Caco-2 (cell line): ENCODE measurements at regions of chr1 and their contacts with region 1.

Region 1: GRCh38 chr1:33007190-33008050 is 29.3 kb downstream of the AK2 start:
- DNase-seq: peak; percentile 53 to 62
- H3K4me3 ChIP-seq: no peak overlapping the region
- H3K4me3 Mint-ChIP-seq: peak overlapping the region; percentile 30
- H3K27ac Mint-ChIP-seq: peak overlapping the region; percentile 83
- H3K4me1 ChIP-seq: peaks cover 49% of the 10 kb centered on the region
- H3K4me1 Mint-ChIP-seq: peaks cover 37% of the 10 kb centered on the region
- H3K27me3 ChIP-seq: no peaks in the 10 kb centered on the region
- H3K27me3 Mint-ChIP-seq: no peaks in the 10 kb centered on the region
- CTCF ChIP-seq: peak in 1 of 2 experiments; percentile 26

Region 2: DNA sequence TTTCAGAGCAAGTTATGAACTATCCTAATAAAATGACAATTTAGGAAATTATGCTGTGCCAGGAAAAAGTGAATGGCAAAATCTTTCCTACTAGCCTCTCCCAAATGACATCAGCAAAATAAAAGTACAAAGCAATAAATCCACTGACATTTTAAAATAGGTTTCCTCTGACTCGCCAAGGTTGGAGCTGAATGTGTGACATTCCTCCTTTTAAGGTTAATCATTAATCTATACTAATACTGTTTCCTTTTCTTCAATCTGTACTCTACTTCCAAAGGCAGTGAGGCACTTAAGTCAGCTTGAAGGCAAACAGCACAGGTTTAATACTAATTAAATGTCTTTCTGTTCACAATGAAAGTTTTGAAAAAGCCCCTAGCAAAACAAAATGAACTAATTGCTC is 58.5 kb before region 1 on chr1:
- CTCF ChIA-PET with region 1: no interaction called
- POLR2A ChIA-PET with region 1: no interaction called
- intact Hi-C with region 1: loop called (anchors 5 kb)
- DNase-seq: peak in 1 of 2 experiments; percentile 13
- H3K4me3 ChIP-seq: no peak overlapping the region
- H3K4me3 Mint-ChIP-seq: peak overlapping the region; percentile 22
- H3K27ac Mint-ChIP-seq: no peak overlapping the region
- H3K4me1 ChIP-seq: peaks cover 36% of the 10 kb centered on the region
- H3K4me1 Mint-ChIP-seq: peaks cover 8% of the 10 kb centered on the region
- H3K27me3 ChIP-seq: no peaks in the 10 kb centered on the region
- H3K27me3 Mint-ChIP-seq: no peaks in the 10 kb centered on the region
- CTCF ChIP-seq: no peak

Region 3: DNA sequence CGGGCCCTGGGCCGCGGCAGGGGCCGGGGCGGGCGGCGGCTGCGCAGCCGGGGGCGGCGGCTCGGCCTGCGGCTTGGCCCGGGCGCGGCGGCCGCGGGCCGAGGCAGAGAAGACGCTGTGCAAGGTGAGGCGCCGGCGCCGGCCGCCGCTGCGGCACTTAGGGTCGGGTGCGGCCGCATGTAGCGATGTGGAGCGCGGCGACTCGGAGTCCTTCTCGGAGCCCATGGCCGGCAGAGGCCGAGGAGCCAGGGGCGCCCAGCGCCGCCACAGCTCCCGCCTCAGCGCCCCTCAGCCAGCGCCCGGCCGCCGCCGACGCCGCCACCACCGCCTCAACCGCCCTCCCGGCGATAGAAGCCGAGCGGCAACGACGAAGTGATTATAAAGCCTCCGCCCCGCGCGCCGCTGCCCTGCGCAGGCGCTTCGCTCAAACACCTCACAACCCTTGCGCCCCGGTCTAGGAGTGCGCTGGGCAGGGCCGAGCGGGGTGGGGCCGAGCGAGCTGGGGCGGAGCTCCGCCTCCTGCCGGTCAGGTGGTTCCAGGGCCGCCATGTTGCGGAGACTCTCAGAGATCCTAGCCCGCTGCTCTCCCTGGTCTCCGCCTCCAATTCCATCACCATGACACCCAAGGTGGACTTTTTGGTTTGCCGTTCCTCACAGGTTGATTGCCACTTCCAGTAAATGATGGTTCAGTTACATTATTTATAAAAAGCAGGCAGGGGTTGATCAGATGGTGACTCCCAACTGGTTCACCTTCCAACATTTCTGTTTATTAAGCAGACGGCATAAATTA is 42.8 kb before region 1 on chr1 and contains the start of gene RNF19B:
- CTCF ChIA-PET with region 1: no interaction called
- POLR2A ChIA-PET with region 1: no interaction called
- intact Hi-C with region 1: loop called (anchors 1 kb)
- DNase-seq: peak; percentile 93 to 94
- H3K4me3 ChIP-seq: peak within 1 kb of the TSS; percentile 74
- H3K4me3 Mint-ChIP-seq: peak within 1 kb of the TSS; percentile 81
- H3K27ac Mint-ChIP-seq: no peak within 1 kb of the TSS
- H3K4me1 ChIP-seq: 0 out of 2 replicates have a peak, but pooled peaks cover 10% of the 10 kb centered on the region
- H3K4me1 Mint-ChIP-seq: peaks cover 13% of the 10 kb centered on the region
- H3K27me3 ChIP-seq: no peaks in the 10 kb centered on the region
- H3K27me3 Mint-ChIP-seq: peaks cover 7% of the 10 kb centered on the region
- CTCF ChIP-seq: no peak
- total RNA-seq, gene RNF19B: 13.9 and 14.5 TPM in 2 replicates

Region 4: GRCh38 chr1:33022650-33023200 is 15.3 kb after region 1 on chr1:
- CTCF ChIA-PET with region 1: interaction called, 5 read pairs
- POLR2A ChIA-PET with region 1: no interaction called
- intact Hi-C with region 1: loop called (anchors 2 kb)
- DNase-seq: peak in 1 of 2 experiments; percentile 22
- H3K4me3 ChIP-seq: no peak overlapping the region
- H3K4me3 Mint-ChIP-seq: peak overlapping the region; percentile 50
- H3K27ac Mint-ChIP-seq: peak overlapping the region; percentile 55
- H3K4me1 ChIP-seq: peaks cover 30% of the 10 kb centered on the region
- H3K4me1 Mint-ChIP-seq: peaks cover 20% of the 10 kb centered on the region
- H3K27me3 ChIP-seq: no peaks in the 10 kb centered on the region
- H3K27me3 Mint-ChIP-seq: no peaks in the 10 kb centered on the region
- CTCF ChIP-seq: no peak

Region 5: GRCh38 chr1:34742667-34743270 is 1735.3 kb after region 1 on chr1:
- CTCF ChIA-PET with region 1: no interaction called
- POLR2A ChIA-PET with region 1: no interaction called
- intact Hi-C with region 1: no loop called
- DNase-seq: peak; percentile 80 to 89
- H3K4me3 ChIP-seq: peak overlapping the region; percentile 16; the same call in 1 of the 2 replicates
- H3K4me3 Mint-ChIP-seq: peak overlapping the region; percentile 57
- H3K27ac Mint-ChIP-seq: no peak overlapping the region
- H3K4me1 ChIP-seq: peaks cover 10% of the 10 kb centered on the region
- H3K4me1 Mint-ChIP-seq: peaks cover 10% of the 10 kb centered on the region
- H3K27me3 ChIP-seq: no peaks in the 10 kb centered on the region
- H3K27me3 Mint-ChIP-seq: no peaks in the 10 kb centered on the region
- CTCF ChIP-seq: peak; percentile 78 to 86